Heart right ventricle (tissue), 16 donors: ENCODE measurements at regions of chr14 and their contacts with region 1.

Region 1: GRCh38 chr14:69522026-69522425 is 37.5 kb downstream of the PLEKHD1 start:
- DNase-seq: no peak
- ATAC-seq: no peak
- H3K4me3 ChIP-seq: no peak overlapping the region
- H3K27ac ChIP-seq: no peak overlapping the region
- H3K4me1 ChIP-seq: no peaks in the 10 kb centered on the region
- H3K27me3 ChIP-seq: peaks cover 0 to 14% (median 6%) of the 10 kb centered on the region in 7 donors
- CTCF ChIP-seq: no peak

Region 2: DNA sequence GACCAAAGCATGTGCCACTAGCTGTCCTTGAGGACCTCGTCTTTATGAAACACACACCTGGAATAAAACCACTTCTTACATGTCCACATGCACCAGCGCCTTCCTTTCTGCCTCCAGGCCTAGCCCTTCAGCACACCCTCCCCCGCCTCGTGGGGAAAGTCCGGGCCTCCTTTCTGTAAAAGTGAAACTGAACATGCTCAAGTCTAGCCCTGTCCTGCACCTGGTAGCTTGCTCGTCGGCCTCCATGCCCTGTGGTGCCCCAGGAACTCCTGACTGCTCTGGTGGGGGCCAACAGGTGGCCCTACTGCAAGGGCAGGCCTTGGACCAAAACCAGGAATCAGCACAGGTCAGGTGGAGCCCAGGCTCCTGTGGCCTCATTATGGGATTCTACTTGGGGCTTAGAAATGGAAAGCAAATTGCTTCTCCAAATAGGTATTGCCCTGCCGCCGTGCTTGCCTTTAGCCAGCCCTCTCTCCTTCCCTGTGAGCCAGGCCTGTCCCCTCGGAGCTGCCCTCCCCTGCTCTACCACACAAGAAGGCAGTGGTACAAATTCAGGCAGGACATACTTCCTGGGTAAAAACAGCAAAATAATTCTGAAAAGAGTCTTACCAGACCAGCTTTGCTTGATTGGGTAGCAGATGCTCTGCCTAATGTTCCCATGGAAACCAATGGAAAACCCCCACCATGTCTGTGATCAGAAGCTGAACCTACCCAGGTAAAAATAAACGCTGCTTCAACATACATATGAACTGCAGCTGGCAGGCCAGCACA is 167.5 kb before region 1 on chr14:
- intact Hi-C with region 1: no loop called
- DNase-seq: no peak
- ATAC-seq: no peak
- H3K4me3 ChIP-seq: no peak overlapping the region
- H3K27ac ChIP-seq: peak overlapping the region in 4 of 10 donors; percentile 34 to 68 (median 52)
- H3K4me1 ChIP-seq: peaks cover 0 to 18% (median 7%) of the 10 kb centered on the region in 9 donors
- H3K27me3 ChIP-seq: no peaks in the 10 kb centered on the region
- CTCF ChIP-seq: no peak

Region 3: DNA sequence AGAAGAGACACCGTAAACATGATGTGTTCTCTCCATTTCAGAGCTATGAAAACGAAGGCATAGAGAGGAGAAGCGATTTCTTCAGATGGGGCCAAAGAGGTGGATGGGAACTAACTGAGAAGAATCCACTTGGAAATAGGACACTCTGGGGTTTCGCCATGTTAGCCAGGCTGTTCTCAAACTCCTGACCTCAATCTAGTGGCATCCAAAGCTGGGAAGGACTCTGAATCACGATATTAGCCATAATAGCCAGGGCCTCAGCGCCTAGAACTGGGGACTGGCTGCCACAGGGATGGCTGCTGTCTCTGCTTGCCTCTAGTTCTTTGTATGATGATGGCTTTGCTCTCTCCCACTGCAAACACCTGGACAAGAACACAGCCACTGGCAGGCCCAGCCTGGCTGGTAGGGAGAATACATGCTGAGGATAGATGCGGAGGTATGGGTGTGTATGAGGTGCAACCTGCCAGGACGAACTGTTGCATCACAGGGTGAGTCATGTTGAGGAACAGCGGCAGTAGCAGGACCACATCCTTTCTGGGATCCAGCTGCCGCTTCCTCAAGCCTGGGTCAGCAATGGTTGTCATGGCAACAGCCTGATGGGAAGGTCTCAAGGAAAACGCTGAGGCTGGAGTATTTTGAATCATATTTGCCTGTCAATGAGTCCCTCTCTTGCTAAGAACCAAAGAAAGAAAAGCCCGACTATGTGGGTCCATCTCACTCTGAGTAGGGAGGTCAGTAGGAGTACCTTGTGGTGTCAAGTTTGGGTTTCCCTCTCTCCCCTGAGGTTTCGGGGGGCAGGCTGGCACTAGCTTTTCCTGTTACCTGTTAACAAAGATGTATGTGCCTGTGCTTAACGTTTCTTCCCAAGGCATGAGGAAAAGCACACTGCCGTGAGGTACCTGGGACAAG is 21.6 kb after region 1 on chr14:
- intact Hi-C with region 1: loop called in 1 of 10 experiments (anchors 2 kb)
- DNase-seq: peak in 1 of 2 donors; percentile 11
- ATAC-seq: peak in 2 of 8 donors; percentile 49 to 59
- H3K4me3 ChIP-seq: no peak overlapping the region
- H3K27ac ChIP-seq: no peak overlapping the region
- H3K4me1 ChIP-seq: peaks cover 0 to 27% (median 0%) of the 10 kb centered on the region in 9 donors
- H3K27me3 ChIP-seq: peaks cover 0 to 39% (median 21%) of the 10 kb centered on the region in 7 donors
- CTCF ChIP-seq: no peak

Region 4: DNA sequence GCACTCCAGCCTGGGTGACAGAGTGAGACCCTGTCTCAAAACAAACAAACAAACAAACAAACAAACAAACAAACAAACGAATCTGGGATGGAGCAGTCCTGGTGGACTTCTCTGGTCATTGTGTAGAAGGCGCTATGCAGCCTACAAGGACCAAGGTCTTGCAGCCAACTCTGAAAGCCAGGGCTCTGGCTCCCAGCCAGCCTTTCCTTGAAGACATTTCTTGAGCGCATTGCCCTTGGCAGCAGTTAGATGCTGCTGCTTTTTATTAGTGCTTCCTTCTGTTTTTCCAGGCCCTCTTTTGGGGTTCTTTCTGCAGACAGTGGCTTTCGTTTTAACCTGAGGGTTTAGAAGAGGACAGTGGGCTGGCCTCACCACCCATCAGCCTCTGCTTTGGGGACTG is 32.5 kb after region 1 on chr14:
- intact Hi-C with region 1: no loop called
- DNase-seq: no peak
- ATAC-seq: no peak
- H3K4me3 ChIP-seq: no peak overlapping the region
- H3K27ac ChIP-seq: no peak overlapping the region
- H3K4me1 ChIP-seq: no peaks in the 10 kb centered on the region
- H3K27me3 ChIP-seq: peaks cover 0 to 65% (median 42%) of the 10 kb centered on the region in 7 donors
- CTCF ChIP-seq: no peak